Activated CD4-positive, alpha-beta memory T cell treated with anti-CD3 and anti-CD28 coated beads for 36 hours (primary cell): ENCODE measurements at regions of chr15 and their contacts with region 1.

Region 1: GRCh38 chr15:50354838-50355618 is at the start of gene GABPB1:
- DNase-seq: peak; percentile 92
- H3K4me3 Mint-ChIP-seq: peak within 1 kb of the TSS; percentile 90
- H3K27ac Mint-ChIP-seq: peak within 1 kb of the TSS; percentile 98
- H3K4me1 Mint-ChIP-seq: peaks cover 44% of the 10 kb centered on the region
- H3K27me3 Mint-ChIP-seq: peaks cover 2% of the 10 kb centered on the region
- total RNA-seq, gene GABPB1: 54.1 to 58.2 TPM

Region 2: DNA sequence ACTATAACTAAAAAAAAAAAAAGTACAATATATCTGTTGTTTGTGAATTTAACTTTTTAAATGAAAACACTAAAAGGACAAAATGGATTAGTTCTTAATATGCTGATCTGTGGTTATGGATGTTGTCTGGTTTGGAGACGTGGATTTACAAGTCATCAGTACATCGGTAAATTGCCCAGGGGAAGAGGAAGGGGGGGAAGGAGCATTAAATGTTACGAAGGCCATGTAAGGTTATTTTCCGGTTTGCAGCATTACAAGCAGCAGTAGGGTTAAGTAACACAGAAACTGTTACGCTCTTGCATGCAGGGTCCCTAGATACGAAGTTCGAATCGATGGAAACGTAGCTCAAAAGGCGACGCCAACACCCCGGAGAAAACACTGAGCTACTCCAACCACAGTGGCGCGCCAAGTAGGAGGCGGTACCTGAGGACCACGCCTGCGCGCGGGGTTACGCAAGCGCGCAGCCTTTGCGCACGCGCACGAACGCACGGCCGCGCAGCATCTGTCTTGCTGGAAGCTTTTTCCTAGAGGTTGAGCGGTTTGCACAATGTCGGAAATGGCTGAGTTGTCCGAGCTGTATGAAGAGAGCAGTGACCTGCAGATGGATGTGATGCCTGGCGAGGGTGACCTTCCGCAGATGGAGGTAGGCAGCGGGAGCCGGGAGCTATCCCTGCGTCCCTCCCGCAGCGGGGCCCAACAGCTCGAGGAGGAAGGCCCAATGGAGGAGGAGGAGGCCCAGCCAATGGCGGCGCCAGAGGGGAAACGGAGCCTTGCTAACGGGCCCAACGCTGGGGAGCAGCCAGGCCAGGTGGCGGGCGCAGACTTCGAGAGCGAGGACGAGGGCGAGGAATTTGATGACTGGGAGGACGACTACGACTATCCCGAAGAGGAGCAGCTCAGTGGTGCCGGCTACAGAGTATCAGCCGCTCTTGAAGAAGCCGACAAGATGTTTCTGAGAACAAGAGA is 1477.1 kb before region 1 on chr15 and contains the start of gene EID1:
- CTCF ChIA-PET with region 1: no interaction called
- POLR2A ChIA-PET with region 1: no interaction called
- intact Hi-C with region 1: loop called (anchors 2 kb)
- DNase-seq: peak; percentile 96
- H3K4me3 Mint-ChIP-seq: peak within 1 kb of the TSS; percentile 99
- H3K27ac Mint-ChIP-seq: peak within 1 kb of the TSS; percentile 96
- H3K4me1 Mint-ChIP-seq: peaks cover 44% of the 10 kb centered on the region
- H3K27me3 Mint-ChIP-seq: peaks cover 12% of the 10 kb centered on the region
- total RNA-seq, gene EID1: 88.3 to 90.0 TPM

Region 3: DNA sequence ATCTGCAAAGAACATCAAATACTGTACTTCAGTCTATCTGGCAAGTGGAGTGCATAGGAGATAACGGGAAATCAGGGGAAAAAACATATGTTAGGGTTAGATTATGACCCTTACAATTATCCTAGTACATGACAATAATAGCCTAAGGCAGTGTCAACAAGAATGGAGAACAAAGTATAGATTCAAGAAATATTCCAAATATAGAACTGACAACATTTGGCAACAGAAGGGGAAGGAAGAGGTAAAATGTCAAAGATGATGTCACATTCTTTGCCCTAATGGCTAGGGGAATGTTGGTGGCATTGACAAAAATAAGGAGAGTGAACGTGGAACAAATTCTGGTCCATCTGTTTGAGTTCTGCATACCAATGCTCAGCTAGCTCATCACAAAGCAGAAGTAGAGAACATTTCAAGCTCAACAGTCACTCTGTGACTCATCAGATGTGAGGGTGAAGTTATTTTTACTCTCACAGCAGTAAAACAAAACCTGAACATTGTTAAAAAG is 220.5 kb before region 1 on chr15:
- CTCF ChIA-PET with region 1: interaction called, 4 read pairs
- POLR2A ChIA-PET with region 1: interaction called, 4 read pairs
- intact Hi-C with region 1: loop called (anchors 1 kb)
- DNase-seq: no peak
- H3K4me3 Mint-ChIP-seq: no peak overlapping the region
- H3K27ac Mint-ChIP-seq: peak overlapping the region; percentile 84
- H3K4me1 Mint-ChIP-seq: peaks cover 52% of the 10 kb centered on the region
- H3K27me3 Mint-ChIP-seq: peaks cover 14% of the 10 kb centered on the region

Region 4: GRCh38 chr15:50330921-50331320 is 24.1 kb before region 1 on chr15:
- CTCF ChIA-PET with region 1: no interaction called
- POLR2A ChIA-PET with region 1: interaction called, 4 read pairs
- intact Hi-C with region 1: loop called (anchors 2 kb)
- DNase-seq: no peak
- H3K4me3 Mint-ChIP-seq: no peak overlapping the region
- H3K27ac Mint-ChIP-seq: no peak overlapping the region
- H3K4me1 Mint-ChIP-seq: peaks cover 20% of the 10 kb centered on the region
- H3K27me3 Mint-ChIP-seq: no peaks in the 10 kb centered on the region

Region 5: DNA sequence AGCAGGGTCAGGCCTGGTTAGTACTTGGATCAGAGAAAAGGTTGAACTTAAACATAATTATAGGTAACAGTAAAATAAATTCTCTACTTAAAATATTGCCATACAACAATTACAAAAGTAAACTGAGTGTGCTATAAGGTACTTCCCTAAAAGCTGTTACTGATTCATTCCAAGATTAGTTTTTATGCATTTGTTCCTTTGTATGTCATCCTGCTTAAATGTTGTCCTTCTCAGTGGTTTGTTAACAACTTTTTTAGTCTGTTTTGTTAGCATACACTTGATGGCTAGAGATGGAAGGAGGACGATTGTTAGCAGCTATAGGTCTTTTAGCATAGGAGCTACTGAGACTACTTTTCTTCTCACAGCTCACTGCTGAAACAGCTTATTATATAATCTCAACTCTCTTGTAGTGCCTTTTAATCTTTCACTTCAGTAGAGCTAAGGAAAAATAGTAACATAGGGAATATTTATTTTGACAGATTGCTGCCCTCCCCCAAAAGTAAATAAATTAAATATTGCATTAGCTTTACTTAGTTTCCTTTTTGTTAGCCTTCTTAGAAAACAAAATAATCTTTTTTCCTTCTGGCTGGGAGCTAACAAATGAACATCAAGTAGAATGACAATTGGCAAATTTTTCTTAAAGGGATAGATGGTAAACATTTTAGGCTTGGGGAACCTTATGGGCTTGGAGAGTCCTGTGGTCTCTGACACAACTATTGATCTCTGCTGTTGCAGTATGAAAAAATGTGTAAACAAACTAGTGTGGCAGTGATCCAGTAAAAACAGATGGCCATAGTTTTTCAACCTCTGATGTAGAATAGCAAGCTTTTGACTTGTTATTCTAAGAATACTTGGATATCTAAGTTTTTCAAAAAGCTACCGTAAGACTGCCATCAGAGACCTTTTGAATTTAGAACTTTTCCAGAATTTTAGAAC is 108.7 kb after region 1 on chr15:
- CTCF ChIA-PET with region 1: no interaction called
- POLR2A ChIA-PET with region 1: no interaction called
- intact Hi-C with region 1: loop called (anchors 2 kb)
- DNase-seq: no peak
- H3K4me3 Mint-ChIP-seq: no peak overlapping the region
- H3K27ac Mint-ChIP-seq: no peak overlapping the region
- H3K4me1 Mint-ChIP-seq: peaks cover 6% of the 10 kb centered on the region
- H3K27me3 Mint-ChIP-seq: no peaks in the 10 kb centered on the region

Region 6: DNA sequence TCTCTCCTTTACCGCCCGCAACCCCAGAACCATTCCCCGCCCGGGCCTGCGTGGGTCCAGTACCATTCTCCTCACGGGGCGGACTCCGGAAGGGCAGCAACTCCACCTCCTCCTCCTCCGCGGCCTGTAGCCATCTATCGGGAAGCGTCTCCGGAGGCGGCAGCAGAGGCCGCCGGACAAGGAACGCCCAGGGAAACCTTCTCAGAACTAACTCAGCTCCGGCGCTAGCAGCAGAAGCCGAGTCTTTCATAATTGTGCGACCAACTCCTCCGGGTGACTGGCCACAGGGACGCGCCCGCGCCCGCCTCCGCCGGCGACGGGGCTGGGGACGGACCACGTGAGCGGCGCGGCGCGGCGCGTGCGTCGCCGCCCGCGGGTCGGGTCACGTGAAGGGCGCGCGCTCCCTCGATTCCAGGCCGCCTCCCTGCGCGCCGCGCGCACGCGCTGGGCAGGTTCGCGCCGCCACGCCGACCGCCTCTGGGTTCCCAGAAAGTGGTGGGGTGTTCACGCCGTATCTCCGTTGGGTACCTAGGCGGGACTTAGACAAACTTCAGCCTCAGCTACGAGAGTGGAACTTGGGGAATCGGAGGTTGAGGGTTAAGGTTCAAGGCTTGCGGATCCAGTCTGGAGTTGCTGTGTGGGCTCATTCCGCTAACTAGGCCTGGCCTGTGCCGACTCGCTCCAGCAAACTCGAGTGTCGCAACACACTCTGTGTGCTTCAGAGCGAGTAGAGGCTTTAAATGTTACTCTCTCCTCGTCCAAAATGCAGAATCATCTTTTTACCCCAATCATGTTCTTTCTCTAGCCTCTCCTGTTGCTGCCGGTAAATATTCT is 331.7 kb after region 1 on chr15 and contains the start of gene TRPM7:
- CTCF ChIA-PET with region 1: no interaction called
- POLR2A ChIA-PET with region 1: no interaction called
- intact Hi-C with region 1: loop called (anchors 2 kb)
- DNase-seq: peak; percentile 93
- H3K4me3 Mint-ChIP-seq: peak within 1 kb of the TSS; percentile 99
- H3K27ac Mint-ChIP-seq: peak within 1 kb of the TSS; percentile 100
- H3K4me1 Mint-ChIP-seq: peaks cover 51% of the 10 kb centered on the region
- H3K27me3 Mint-ChIP-seq: no peaks in the 10 kb centered on the region
- total RNA-seq, gene TRPM7: 37.4 to 44.8 TPM

Region 7: GRCh38 chr15:50883903-50884302 is 528.9 kb after region 1 on chr15:
- CTCF ChIA-PET with region 1: no interaction called
- POLR2A ChIA-PET with region 1: interaction called, 10 read pairs
- intact Hi-C with region 1: loop called (anchors 2 kb)
- DNase-seq: peak; percentile 34
- H3K4me3 Mint-ChIP-seq: no peak overlapping the region
- H3K27ac Mint-ChIP-seq: peak overlapping the region; percentile 56
- H3K4me1 Mint-ChIP-seq: peaks cover 65% of the 10 kb centered on the region
- H3K27me3 Mint-ChIP-seq: no peaks in the 10 kb centered on the region

Region 8: GRCh38 chr15:50925281-50925680 is 570.3 kb after region 1 on chr15:
- CTCF ChIA-PET with region 1: no interaction called
- POLR2A ChIA-PET with region 1: no interaction called
- intact Hi-C with region 1: no loop called
- DNase-seq: no peak
- H3K4me3 Mint-ChIP-seq: no peak overlapping the region
- H3K27ac Mint-ChIP-seq: no peak overlapping the region
- H3K4me1 Mint-ChIP-seq: peaks cover 4% of the 10 kb centered on the region
- H3K27me3 Mint-ChIP-seq: no peaks in the 10 kb centered on the region